ENCODE measurements at regions of chr5 and their contacts with region 1.

Region 1: GRCh38 chr5:134041570-134042411 is 37.0 kb upstream of the VDAC1 start:
- DNase-seq: peak in 1 of 35 experiments; percentile 25
- ATAC-seq: peak in 2 of 4 experiments; percentile 11 to 15
- H3K4me3 ChIP-seq: no peak overlapping the region
- H3K4me3 Mint-ChIP-seq: peak overlapping the region in 2 of 3 donors; percentile 31 to 61
- H3K27ac ChIP-seq: peak overlapping the region; percentile 9
- H3K27ac Mint-ChIP-seq: peak overlapping the region; percentile 81 to 89
- H3K4me1 ChIP-seq: peaks cover 40 to 55% of the 10 kb centered on the region in 2 experiments
- H3K4me1 Mint-ChIP-seq: peaks cover 58 to 65% (median 64%) of the 10 kb centered on the region in 3 donors
- H3K27me3 ChIP-seq: no peaks in the 10 kb centered on the region
- H3K27me3 Mint-ChIP-seq: no peaks in the 10 kb centered on the region

Region 2: DNA sequence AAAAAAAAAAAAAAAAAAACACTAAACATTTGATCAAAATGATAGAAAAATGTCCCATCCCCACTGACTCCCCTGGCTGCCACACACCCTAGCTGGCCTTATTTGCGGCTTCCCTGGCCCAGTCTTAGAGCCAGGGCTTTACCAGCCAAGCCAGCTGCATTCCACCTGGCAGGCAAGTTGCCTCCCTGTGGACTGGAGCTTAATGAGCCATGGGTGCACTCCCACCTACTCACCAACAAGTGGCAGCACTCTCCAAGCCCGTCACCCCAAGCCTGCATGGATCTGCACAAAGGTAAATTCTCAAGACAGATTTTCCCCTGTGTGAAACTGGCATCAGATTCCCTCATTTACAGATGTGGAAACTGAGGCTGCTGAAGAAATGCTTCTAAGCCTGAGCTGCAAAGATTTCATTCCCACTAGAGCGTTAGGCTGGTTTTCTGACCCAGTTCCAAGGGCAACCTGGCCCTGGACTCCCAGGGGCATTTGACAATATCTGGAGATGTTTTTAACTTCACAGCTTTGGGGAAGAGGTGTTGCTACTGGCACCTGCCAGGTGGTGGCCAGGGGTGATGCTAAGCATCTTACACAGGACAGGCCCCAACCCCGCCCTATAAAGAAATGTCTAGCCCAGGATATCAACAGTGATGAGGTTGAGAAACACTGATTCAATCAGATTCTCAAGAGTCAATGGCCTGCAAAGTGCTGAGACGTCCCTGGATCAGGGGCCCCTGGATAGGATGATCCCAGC is 15.1 kb before region 1 on chr5:
- CTCF ChIA-PET with region 1: interaction called, 4 to 10 read pairs
- POLR2A ChIA-PET with region 1: interaction called in 1 of 2 experiments, 3 read pairs
- DNase-seq: peak in 34 of 35 experiments; percentile 25 to 75 (median 50)
- ATAC-seq: peak; percentile 89 to 100 (median 94)
- H3K4me3 ChIP-seq: no peak overlapping the region
- H3K4me3 Mint-ChIP-seq: no peak overlapping the region
- H3K27ac ChIP-seq: no peak overlapping the region
- H3K27ac Mint-ChIP-seq: no peak overlapping the region
- H3K4me1 ChIP-seq: no peaks in the 10 kb centered on the region
- H3K4me1 Mint-ChIP-seq: peaks cover 0 to 6% (median 3%) of the 10 kb centered on the region in 3 donors
- H3K27me3 ChIP-seq: peaks cover 0 to 11% of the 10 kb centered on the region in 2 experiments
- H3K27me3 Mint-ChIP-seq: peaks cover 0 to 5% of the 10 kb centered on the region in 2 donors

Region 3: DNA sequence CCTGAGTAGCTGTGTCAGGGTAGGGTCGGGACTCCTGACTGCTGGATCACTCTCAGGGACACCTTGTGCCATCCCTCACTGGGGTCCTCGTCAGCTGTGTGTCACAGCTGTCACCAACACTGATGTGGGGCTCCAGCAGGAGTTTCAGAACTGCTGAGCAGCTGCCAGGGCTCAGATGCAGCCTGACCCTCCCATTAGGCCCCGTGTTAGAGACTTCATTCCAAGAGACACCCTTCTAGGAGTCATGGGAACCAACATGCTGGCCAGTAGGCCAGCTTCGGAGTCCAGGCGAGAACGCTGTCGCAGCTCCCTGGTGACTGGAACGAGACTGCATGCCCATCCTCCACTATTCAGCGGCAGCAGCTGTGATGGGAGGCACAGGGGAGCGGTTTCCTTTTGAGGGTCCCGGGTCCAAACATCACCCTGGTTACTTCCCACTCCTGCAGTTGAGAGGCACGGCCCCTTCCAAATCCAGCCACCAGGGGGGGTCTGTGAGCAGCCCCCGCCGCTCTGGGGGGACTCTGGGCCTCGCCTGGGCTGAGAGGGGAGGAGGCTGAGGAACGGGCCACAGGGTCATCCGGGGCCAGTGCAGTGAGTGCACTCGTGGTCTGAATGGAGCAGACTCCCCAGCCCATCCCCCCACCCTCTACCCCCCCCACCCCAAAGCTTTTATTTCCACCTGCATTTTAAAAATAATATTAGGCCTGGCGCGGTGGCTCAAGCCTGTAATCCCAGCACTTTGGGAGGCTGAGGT is 60.1 kb after region 1 on chr5:
- CTCF ChIA-PET with region 1: interaction called, 13 to 44 read pairs
- POLR2A ChIA-PET with region 1: no interaction called
- DNase-seq: peak in 33 of 35 experiments; percentile 39 to 84 (median 68)
- ATAC-seq: peak; percentile 10 to 33 (median 26)
- H3K4me3 ChIP-seq: no peak overlapping the region
- H3K4me3 Mint-ChIP-seq: peak overlapping the region in 1 of 3 donors; percentile 61
- H3K27ac ChIP-seq: peak overlapping the region; percentile 62
- H3K27ac Mint-ChIP-seq: peak overlapping the region; percentile 97 to 98
- H3K4me1 ChIP-seq: peaks cover 71 to 100% of the 10 kb centered on the region in 2 experiments
- H3K4me1 Mint-ChIP-seq: peaks cover 89 to 95% (median 91%) of the 10 kb centered on the region in 3 donors
- H3K27me3 ChIP-seq: no peaks in the 10 kb centered on the region
- H3K27me3 Mint-ChIP-seq: no peaks in the 10 kb centered on the region

Region 4: GRCh38 chr5:134111741-134112647 is 70.2 kb after region 1 on chr5:
- CTCF ChIA-PET with region 1: interaction called, 6 to 24 read pairs
- POLR2A ChIA-PET with region 1: interaction called, 3 to 4 read pairs
- DNase-seq: peak in 4 of 35 experiments; percentile 23 to 75 (median 40)
- ATAC-seq: peak in 3 of 4 experiments; percentile 6 to 26 (median 8)
- H3K4me3 ChIP-seq: peak overlapping the region; percentile 56 to 88
- H3K4me3 Mint-ChIP-seq: peak overlapping the region; percentile 93 to 94 (median 94)
- H3K27ac ChIP-seq: peak overlapping the region; percentile 62
- H3K27ac Mint-ChIP-seq: peak overlapping the region; percentile 87 to 94
- H3K4me1 ChIP-seq: peaks cover 39 to 79% of the 10 kb centered on the region in 2 experiments
- H3K4me1 Mint-ChIP-seq: peaks cover 59 to 68% (median 66%) of the 10 kb centered on the region in 3 donors
- H3K27me3 ChIP-seq: peaks cover 0 to 4% of the 10 kb centered on the region in 2 experiments
- H3K27me3 Mint-ChIP-seq: no peaks in the 10 kb centered on the region

Region 5: DNA sequence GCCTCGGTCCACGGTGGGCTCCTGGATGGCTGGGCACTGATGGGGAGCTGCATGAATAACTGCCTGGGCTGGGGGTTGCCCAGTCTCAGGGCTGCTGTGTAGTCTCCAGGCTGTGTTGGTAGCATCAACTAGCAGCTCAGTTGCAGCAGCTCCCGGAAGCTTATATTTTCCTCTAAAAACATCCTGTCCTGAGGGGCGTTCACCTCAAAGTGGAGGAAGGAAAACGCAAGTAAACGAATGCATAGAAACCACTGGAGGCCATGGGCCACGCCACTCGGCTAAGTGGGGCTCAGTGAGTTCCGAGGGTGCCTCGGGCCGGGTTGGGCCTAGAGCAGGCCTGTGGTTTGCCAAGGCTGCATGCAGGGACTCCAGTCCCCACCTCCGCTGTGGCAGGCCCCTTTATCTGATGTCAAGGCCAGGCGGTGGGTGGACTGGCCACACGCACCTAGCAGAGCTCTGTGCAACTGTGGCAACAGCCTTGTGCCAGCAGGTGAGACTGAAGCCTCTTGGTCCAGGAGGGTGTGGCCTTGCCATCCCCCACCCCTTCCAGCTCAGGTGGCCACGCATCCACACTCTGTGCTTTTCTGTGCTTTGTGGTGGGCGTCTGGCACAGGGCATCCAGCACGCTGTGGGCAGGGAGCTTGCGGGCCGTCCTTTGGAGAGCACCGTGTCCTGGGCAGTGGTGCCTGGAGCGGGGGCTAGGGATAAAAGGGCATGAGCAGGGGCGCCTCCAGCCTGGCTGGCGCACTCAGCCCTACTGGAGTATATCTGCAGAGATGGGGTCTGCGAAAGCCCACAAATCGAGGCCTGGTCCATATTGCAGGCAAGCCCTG is 87.8 kb after region 1 on chr5:
- CTCF ChIA-PET with region 1: interaction called, 6 to 13 read pairs
- POLR2A ChIA-PET with region 1: interaction called in 1 of 2 experiments, 3 read pairs
- DNase-seq: peak in 19 of 35 experiments; percentile 37 to 73 (median 45)
- ATAC-seq: peak; percentile 7 to 36 (median 17)
- H3K4me3 ChIP-seq: peak overlapping the region; percentile 65 to 91
- H3K4me3 Mint-ChIP-seq: peak overlapping the region; percentile 88 to 99 (median 92)
- H3K27ac ChIP-seq: peak overlapping the region; percentile 95
- H3K27ac Mint-ChIP-seq: peak overlapping the region; percentile 92 to 97
- H3K4me1 ChIP-seq: peaks cover 84 to 100% of the 10 kb centered on the region in 2 experiments
- H3K4me1 Mint-ChIP-seq: peaks cover 98 to 100% (median 100%) of the 10 kb centered on the region in 3 donors
- H3K27me3 ChIP-seq: no peaks in the 10 kb centered on the region
- H3K27me3 Mint-ChIP-seq: no peaks in the 10 kb centered on the region

Region 6: DNA sequence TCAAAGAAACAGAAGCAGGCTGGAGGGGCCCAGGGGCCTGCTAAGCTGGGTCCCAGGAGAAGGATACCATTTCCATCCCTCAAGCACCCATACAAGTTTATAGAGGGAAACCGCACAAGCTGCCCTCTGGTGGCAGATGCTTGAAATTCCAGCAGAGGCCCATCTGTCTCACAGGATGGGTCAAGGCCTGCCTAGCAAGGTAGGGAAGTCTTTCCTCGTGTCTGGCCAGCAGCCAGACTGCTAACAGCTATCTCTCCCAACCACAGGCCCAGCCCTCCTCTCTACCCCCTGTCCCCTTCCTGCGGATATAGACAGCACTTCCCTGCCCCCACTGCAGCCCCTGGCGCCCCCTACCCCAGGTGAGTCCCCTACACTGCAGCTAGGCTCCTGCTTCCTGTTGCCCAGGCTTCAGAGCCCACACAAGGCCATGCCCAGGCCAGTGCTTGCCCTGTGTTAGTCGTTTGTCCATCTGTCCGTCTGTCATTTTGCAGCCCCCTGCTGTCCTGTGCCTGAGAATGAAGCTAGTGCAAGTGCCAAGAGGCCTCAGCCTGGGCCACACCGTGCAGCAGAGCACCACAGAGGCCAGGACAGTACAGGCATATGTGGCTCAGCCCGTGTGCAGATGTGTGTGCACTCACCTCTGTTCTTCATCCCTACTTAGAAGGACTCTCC is 98.9 kb after region 1 on chr5:
- CTCF ChIA-PET with region 1: interaction called, 22 to 37 read pairs
- POLR2A ChIA-PET with region 1: no interaction called
- DNase-seq: peak in 29 of 35 experiments; percentile 36 to 80 (median 53)
- ATAC-seq: peak; percentile 31 to 43 (median 37)
- H3K4me3 ChIP-seq: no peak overlapping the region
- H3K4me3 Mint-ChIP-seq: peak overlapping the region in 1 of 3 donors; percentile 23
- H3K27ac ChIP-seq: peak overlapping the region; percentile 95
- H3K27ac Mint-ChIP-seq: peak overlapping the region; percentile 92 to 97
- H3K4me1 ChIP-seq: peaks cover 28 to 76% of the 10 kb centered on the region in 2 experiments
- H3K4me1 Mint-ChIP-seq: peaks cover 71 to 83% (median 74%) of the 10 kb centered on the region in 3 donors
- H3K27me3 ChIP-seq: no peaks in the 10 kb centered on the region
- H3K27me3 Mint-ChIP-seq: no peaks in the 10 kb centered on the region

Region 7: GRCh38 chr5:134145779-134146581 is 104.2 kb after region 1 on chr5:
- CTCF ChIA-PET with region 1: interaction called, 22 to 37 read pairs
- POLR2A ChIA-PET with region 1: interaction called, 3 to 8 read pairs
- DNase-seq: peak; percentile 49 to 90 (median 78)
- ATAC-seq: peak; percentile 59 to 70 (median 66)
- H3K4me3 ChIP-seq: no peak overlapping the region
- H3K4me3 Mint-ChIP-seq: no peak overlapping the region
- H3K27ac ChIP-seq: peak overlapping the region; percentile 21
- H3K27ac Mint-ChIP-seq: peak overlapping the region; percentile 75 to 79
- H3K4me1 ChIP-seq: peaks cover 13 to 44% of the 10 kb centered on the region in 2 experiments
- H3K4me1 Mint-ChIP-seq: peaks cover 42 to 73% (median 50%) of the 10 kb centered on the region in 3 donors
- H3K27me3 ChIP-seq: no peaks in the 10 kb centered on the region
- H3K27me3 Mint-ChIP-seq: no peaks in the 10 kb centered on the region

Region 8: GRCh38 chr5:134451936-134452505 is 410.2 kb after region 1 on chr5:
- CTCF ChIA-PET with region 1: no interaction called
- POLR2A ChIA-PET with region 1: no interaction called
- DNase-seq: no peak
- ATAC-seq: no peak
- H3K4me3 ChIP-seq: no peak overlapping the region
- H3K4me3 Mint-ChIP-seq: no peak overlapping the region
- H3K27ac ChIP-seq: no peak overlapping the region
- H3K27ac Mint-ChIP-seq: no peak overlapping the region
- H3K4me1 ChIP-seq: no peaks in the 10 kb centered on the region
- H3K4me1 Mint-ChIP-seq: peaks cover 0 to under 1% (median under 1%) of the 10 kb centered on the region in 3 donors
- H3K27me3 ChIP-seq: no peaks in the 10 kb centered on the region
- H3K27me3 Mint-ChIP-seq: peaks cover 0 to 1% of the 10 kb centered on the region in 2 donors

Measured in T-cell (primary cell).